Activated T-helper 1 cell treated with anti-CD3 and anti-CD28 coated beads, Interleukin-12 subunit alpha, Interleukin-12 subunit beta, Interleukin-2, Interleukin-4 antibody, amounts not matched to agents 30 ng/mL and 10 ng/mL and 1 ng/mL, durations not matched to agents 14 hours and 24 hours and 36 hours (primary cell): ENCODE measurements at regions of chr4 and their contacts with region 1.

Region 1: DNA sequence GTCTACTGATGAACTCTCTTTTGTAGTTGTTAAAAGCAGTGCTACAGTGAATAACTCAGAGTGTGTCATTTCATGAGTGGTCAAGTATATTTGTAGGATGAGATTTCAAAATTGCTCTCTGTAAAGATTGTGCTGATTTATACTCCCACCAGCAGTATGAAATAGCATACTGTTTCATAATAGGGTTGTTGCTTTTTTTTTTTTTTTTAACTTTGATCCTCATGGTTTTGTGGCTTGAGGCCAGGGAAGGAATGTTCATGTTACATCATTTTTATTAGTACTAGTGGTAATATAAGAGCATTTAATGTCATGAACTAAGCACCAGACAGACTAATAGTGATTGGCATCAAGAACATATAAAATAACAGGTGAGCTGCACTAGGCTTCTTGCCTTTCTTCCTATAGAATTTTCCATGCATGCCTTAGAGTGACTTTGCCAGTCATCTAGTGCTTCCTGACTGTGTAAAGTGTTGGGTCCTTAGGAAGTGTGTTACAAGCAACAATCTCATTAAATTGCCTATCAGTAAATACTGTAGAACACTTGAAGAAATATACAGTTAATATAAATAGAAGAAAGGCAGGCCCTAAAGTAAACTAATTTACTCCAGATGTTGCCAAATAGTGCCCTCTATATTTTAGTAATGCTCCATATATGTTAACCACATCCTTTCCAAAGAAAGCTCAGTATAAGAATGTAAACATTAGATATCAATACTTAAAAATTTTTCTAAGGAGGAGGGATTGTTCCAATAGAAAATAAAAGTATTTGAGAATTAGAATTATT is 38.6 kb upstream of the MSMO1 start:
- DNase-seq: no peak
- H3K4me3 Mint-ChIP-seq: peak overlapping the region; percentile 17
- H3K27ac Mint-ChIP-seq: peak overlapping the region; percentile 35
- H3K4me1 Mint-ChIP-seq: peaks cover 44% of the 10 kb centered on the region
- H3K27me3 Mint-ChIP-seq: no peaks in the 10 kb centered on the region

Region 2: DNA sequence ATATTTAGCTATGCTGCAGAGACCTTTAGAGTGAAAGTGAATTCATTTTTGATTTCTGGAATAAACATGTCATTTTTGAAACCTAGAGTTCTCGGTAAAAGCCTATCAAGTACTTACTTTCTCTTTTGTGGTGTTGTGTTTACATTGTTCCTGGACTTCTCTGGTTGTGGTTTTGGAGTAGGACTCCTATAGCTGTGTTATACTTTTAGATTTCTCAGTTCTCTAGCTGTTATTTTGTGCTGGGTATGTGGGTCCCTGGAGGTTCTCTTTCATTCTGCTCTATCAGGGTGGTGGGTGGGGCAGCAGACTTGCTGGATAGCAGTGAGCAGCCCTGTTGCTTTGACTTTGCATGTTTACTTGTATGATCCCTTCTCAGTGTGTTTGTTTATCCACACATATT is 13.0 kb after region 1 on chr4:
- intact Hi-C with region 1: loop called (anchors 2 kb)
- DNase-seq: no peak
- H3K4me3 Mint-ChIP-seq: peak overlapping the region; percentile 73
- H3K27ac Mint-ChIP-seq: peak overlapping the region; percentile 74
- H3K4me1 Mint-ChIP-seq: peaks cover 33% of the 10 kb centered on the region
- H3K27me3 Mint-ChIP-seq: no peaks in the 10 kb centered on the region

Region 3: GRCh38 chr4:165548702-165549101 is 259.9 kb after region 1 on chr4:
- intact Hi-C with region 1: no loop called
- DNase-seq: no peak
- H3K4me3 Mint-ChIP-seq: no peak overlapping the region
- H3K27ac Mint-ChIP-seq: no peak overlapping the region
- H3K4me1 Mint-ChIP-seq: no peaks in the 10 kb centered on the region
- H3K27me3 Mint-ChIP-seq: no peaks in the 10 kb centered on the region